A549 (cell line): ENCODE measurements at regions of chr11 and their contacts with region 1.

Region 1: DNA sequence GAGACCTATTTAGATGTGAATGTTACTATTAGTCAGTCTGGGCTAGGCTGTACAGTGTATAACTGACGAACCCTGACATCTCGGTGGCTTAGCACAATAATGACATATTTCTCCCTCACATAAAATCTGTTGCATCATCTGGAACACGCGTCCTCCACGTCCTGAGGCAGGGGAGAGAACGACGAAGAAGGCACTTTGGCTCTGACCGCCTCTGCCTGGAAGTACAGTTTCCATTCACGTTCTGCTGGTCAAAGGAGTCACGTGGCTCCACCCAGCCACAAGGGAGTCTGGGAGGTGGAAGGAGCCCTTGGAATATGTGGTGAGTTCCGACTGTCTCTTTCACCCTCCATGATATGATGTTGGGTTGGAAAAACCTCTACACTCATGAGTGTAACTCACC is 55.1 kb upstream of the CD82 start:
- DNase-seq: no peak
- ATAC-seq: no peak
- H3K4me3 ChIP-seq: no peak overlapping the region
- H3K27ac ChIP-seq: no peak overlapping the region
- H3K4me1 ChIP-seq: 0 out of 3 replicates have a peak, but pooled peaks cover 3% of the 10 kb centered on the region
- CTCF ChIP-seq: no peak
- EP300 ChIP-seq: no peak
- POLR2A ChIP-seq: no peak
- RAD21 ChIP-seq: no peak

Region 2: DNA sequence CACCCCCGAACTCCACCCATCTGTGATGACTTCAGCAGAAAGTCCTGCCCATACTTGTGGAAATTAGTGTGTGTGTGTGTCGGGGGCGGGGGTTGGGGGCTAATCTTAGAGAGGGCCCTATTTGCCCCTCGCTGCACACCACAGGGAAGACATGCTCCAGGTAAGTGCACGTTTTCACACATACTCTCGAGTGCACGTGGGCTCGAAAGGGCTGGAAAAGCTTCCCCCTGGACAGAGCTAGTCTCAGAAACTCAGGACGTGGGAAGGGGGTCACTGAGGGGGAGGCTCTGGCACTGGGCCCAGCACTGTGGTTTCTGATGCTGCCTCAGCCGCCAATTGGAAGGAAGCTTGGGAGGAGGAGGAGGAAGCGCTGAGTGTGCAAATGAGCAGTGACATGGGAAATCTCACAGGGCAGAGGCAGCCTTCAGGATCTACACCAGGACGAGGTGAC is 14.4 kb after region 1 on chr11:
- CTCF ChIA-PET with region 1: interaction called, 12 read pairs
- POLR2A ChIA-PET with region 1: no interaction called
- DNase-seq: no peak
- ATAC-seq: no peak
- H3K4me3 ChIP-seq: no peak overlapping the region
- H3K27ac ChIP-seq: no peak overlapping the region
- H3K4me1 ChIP-seq: peaks cover 8% of the 10 kb centered on the region; the same call in 1 of the 3 replicates
- CTCF ChIP-seq: no peak
- EP300 ChIP-seq: no peak
- POLR2A ChIP-seq: no peak
- RAD21 ChIP-seq: no peak

Region 3: DNA sequence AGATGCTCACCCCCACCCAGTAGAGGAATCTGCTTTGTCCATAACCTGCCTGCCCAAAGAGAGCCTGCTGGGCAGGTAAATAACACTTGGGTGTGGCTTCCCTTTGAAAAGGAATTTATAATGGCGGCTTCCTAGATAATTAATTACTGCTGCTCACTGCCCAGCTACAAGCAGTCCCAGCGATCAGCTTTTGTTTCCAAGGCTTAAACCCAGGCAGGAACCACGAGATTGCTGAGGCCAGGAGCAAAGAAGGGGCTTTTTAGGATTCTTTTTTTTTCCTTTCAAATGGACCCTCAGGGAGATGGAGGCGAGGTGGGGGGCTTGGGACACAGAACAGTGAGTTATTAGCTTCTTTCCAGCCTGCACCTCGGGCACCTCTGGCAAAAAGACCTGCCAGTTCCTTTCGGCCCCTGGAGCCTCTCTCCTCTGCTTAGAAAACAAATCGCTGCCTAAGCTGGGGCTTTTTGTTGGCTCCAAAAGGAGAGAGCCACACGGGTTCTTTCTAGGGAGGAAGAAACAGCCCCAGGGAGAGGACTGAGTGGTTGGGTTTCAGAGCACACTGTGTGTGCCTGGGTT is 323.6 kb after region 1 on chr11:
- CTCF ChIA-PET with region 1: no interaction called
- POLR2A ChIA-PET with region 1: no interaction called
- DNase-seq: no peak
- ATAC-seq: no peak
- H3K4me3 ChIP-seq: no peak overlapping the region
- H3K27ac ChIP-seq: no peak overlapping the region
- H3K4me1 ChIP-seq: no peaks in the 10 kb centered on the region
- CTCF ChIP-seq: no peak
- EP300 ChIP-seq: no peak
- POLR2A ChIP-seq: no peak
- RAD21 ChIP-seq: no peak